Tibial artery (tissue), 4 donors: ENCODE measurements at regions of chr7 and their contacts with region 1.

Region 1: DNA sequence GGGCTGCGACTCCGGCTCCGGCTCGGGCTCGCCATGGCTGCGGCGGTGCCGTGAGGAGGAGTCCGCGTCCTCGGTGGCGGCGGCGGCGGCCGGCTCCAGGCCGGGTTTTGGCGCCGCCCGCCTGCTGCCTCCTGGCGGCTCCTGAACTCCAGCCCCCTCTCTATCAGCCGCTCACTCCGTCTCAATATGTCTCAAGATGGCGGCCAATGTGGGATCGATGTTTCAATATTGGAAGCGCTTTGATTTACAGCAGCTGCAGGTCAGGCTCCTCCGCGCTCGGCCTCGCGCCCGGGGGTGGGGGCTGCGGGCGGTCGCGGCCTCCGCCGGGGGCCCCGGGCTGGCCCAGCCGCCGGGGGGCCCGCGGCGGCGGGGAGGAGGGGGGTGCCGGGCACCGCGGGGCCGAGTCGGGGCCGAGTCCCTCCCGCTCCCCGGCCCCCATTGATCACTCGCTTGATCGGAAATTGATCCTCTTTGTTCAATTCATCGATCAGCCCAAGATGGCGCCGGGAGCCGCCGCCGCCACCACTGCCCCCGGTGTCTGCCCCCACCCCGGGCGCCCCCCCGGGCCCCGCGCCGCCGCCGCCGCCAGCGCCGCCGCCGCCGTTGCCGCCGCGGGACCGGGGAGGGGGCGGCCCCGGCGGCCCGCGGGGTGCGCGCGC is 1.5 kb upstream of the CUX1 start:
- DNase-seq: peak; percentile 70 to 82
- H3K4me3 ChIP-seq: peak overlapping the region; percentile 92
- H3K27ac ChIP-seq: peak overlapping the region; percentile 67 to 70
- H3K4me1 ChIP-seq: peaks cover 0 to 32% (median 12%) of the 10 kb centered on the region in 4 donors
- H3K27me3 ChIP-seq: no peaks in the 10 kb centered on the region
- CTCF ChIP-seq: peak; percentile 8 to 34

Region 2: GRCh38 chr7:101542527-101543241 is 273.3 kb before region 1 on chr7:
- intact Hi-C with region 1: loop called (anchors 5 kb)
- DNase-seq: peak; percentile 77 to 78
- H3K4me3 ChIP-seq: no peak overlapping the region
- H3K27ac ChIP-seq: no peak overlapping the region
- H3K4me1 ChIP-seq: peaks cover 0 to 9% (median 8%) of the 10 kb centered on the region in 4 donors
- H3K27me3 ChIP-seq: peaks cover 0 to 9% of the 10 kb centered on the region in 2 donors
- CTCF ChIP-seq: peak; percentile 90 to 93

Region 3: GRCh38 chr7:101602484-101603241 is 213.3 kb before region 1 on chr7:
- intact Hi-C with region 1: loop called (anchors 2 kb)
- DNase-seq: peak; percentile 64 to 85
- H3K4me3 ChIP-seq: no peak overlapping the region
- H3K27ac ChIP-seq: peak overlapping the region in 1 of 2 donors; percentile 67
- H3K4me1 ChIP-seq: peaks cover 0 to 34% (median 14%) of the 10 kb centered on the region in 4 donors
- H3K27me3 ChIP-seq: no peaks in the 10 kb centered on the region
- CTCF ChIP-seq: peak; percentile 82 to 94

Region 4: GRCh38 chr7:101870351-101871062 is 54.5 kb after region 1 on chr7:
- intact Hi-C with region 1: no loop called
- DNase-seq: no peak
- H3K4me3 ChIP-seq: no peak overlapping the region
- H3K27ac ChIP-seq: no peak overlapping the region
- H3K4me1 ChIP-seq: peaks cover 0 to 27% (median 9%) of the 10 kb centered on the region in 4 donors
- H3K27me3 ChIP-seq: no peaks in the 10 kb centered on the region
- CTCF ChIP-seq: no peak

Region 5: GRCh38 chr7:101936611-101937231 is 120.8 kb after region 1 on chr7:
- intact Hi-C with region 1: loop called (anchors 5 kb)
- DNase-seq: peak in 1 of 2 donors; percentile 30
- H3K4me3 ChIP-seq: peak overlapping the region; percentile 45 to 52
- H3K27ac ChIP-seq: peak overlapping the region; percentile 80 to 81
- H3K4me1 ChIP-seq: peaks cover 12 to 56% (median 36%) of the 10 kb centered on the region in 4 donors
- H3K27me3 ChIP-seq: no peaks in the 10 kb centered on the region
- CTCF ChIP-seq: no peak

Region 6: GRCh38 chr7:102125127-102125561 is 309.2 kb after region 1 on chr7:
- intact Hi-C with region 1: loop called (anchors 2 kb)
- DNase-seq: peak; percentile 77 to 94
- H3K4me3 ChIP-seq: no peak overlapping the region
- H3K27ac ChIP-seq: peak overlapping the region; percentile 59 to 69
- H3K4me1 ChIP-seq: peaks cover 0 to 13% (median 2%) of the 10 kb centered on the region in 4 donors
- H3K27me3 ChIP-seq: no peaks in the 10 kb centered on the region
- CTCF ChIP-seq: peak; percentile 18 to 38